GM10248 (cell line): ENCODE measurements at regions of chr18 and their contacts with region 1.

Region 1: DNA sequence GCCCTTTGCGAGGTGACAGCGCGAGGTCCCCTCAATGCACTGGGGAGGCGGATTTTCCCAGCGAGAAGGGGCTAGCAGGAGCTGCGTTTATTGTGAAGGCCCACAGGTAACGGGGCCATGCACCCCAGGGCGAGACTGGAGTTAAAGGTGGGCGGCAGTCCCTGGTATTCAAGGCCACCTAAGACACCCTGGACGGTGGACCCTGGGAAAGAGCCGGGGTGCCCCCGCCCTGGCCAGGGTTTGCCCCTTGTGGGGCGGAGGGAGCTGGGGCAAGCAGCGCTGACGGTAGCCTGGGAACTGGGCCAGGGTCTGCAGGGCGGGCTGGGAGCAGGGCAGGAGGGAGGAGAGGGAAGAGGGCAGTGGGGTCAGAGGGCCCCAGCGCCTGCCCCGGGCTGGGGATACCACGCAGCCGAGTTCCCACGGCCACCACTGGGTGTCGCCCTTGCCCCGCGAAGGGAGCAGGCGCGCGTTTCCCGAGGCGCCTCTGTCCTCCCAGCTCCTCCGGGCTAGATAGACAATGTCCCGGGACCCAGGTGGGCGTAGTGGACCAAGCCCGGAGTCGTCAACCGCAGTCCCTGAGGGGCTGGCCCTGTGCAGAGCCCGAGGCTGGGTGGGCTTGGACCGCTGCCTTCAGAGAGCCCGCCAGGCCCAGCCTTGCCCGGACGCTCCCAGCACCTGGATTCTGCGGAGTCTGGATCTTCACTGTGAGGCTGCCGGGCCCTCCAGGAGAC is 80.2 kb downstream of the SMAD4 start:
- DNase-seq: peak; percentile 89
- CTCF ChIP-seq: peak; percentile 94

Region 2: GRCh38 chr18:50853863-50854271 is 256.4 kb before region 1 on chr18:
- CTCF ChIA-PET with region 1: no interaction called
- POLR2A ChIA-PET with region 1: no interaction called
- DNase-seq: no peak
- CTCF ChIP-seq: no peak

Region 3: DNA sequence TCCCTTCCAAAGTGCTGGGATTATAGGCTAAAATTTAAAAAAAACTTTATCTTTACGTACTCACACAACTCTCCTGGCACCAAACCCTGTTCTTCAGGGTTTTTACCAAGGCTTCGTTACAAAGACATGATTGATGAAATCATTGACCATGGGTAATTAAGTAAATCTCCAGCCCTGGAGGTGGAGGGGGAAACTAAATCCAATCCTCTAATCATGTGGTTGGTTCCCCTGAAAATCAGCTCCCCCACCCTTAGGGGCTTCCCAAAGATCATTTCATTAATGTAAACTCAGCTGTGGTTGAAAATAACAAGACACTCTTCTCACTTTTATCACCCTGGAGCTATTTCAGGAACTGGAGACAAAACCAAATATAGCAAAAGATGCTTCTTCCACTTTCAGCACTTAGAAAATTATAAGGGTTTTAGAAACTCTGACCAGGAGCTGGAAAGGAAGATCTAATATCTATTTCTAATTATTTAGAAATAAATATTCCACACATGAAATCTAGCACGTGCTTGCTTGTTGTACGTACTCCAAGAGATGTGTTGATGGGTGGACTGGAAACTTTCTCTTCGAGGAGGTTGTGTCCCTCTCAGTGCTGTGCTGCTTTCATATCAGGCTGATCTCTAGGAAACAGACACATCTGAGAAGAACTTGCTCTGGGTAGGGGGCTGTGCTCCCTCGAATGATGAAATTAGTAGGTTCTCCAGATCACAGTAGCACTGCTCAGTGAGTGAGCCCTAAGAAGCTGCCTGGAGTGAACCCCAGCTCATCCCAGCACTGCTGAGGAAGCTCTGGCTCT is 13.0 kb before region 1 on chr18:
- CTCF ChIA-PET with region 1: interaction called, 19 read pairs
- POLR2A ChIA-PET with region 1: no interaction called
- DNase-seq: no peak
- CTCF ChIP-seq: no peak

Region 4: GRCh38 chr18:51151568-51152511 is 41.6 kb after region 1 on chr18:
- CTCF ChIA-PET with region 1: interaction called, 10 read pairs
- POLR2A ChIA-PET with region 1: no interaction called
- DNase-seq: peak; percentile 70
- CTCF ChIP-seq: peak; percentile 30

Region 5: DNA sequence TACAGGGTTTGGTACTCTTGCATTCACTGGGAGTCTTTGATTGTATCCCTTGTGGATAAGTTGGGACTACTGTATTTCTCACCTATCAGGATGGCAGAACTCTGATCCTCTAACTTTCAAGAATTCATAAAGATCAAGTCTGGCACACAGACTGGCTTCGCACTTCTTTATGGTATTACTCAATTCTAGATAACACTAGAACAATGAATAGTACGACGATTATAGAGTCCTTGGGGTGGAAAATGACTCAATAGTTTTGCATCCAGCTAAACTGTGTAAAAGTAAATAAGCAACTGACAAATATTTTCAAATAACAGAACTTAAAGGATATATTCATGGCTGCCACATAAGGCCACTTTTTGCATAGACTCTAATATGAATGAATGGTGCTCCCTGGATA is 190.7 kb after region 1 on chr18:
- CTCF ChIA-PET with region 1: no interaction called
- POLR2A ChIA-PET with region 1: no interaction called
- DNase-seq: no peak
- CTCF ChIP-seq: no peak

Region 6: GRCh38 chr18:52288403-52289004 is 1178.3 kb after region 1 on chr18:
- CTCF ChIA-PET with region 1: interaction called, 17 read pairs
- POLR2A ChIA-PET with region 1: no interaction called
- DNase-seq: peak; percentile 26
- CTCF ChIP-seq: peak; percentile 87